Adrenal gland (tissue), 19 donors: ENCODE measurements at regions of chr17 and their contacts with region 1.

Region 1: GRCh38 chr17:48335858-48336500 is 94.0 kb downstream of the SKAP1 start:
- DNase-seq: no peak
- H3K4me3 ChIP-seq: no peak overlapping the region
- H3K27ac ChIP-seq: no peak overlapping the region
- H3K4me1 ChIP-seq: no peaks in the 10 kb centered on the region
- H3K27me3 ChIP-seq: peaks cover 8% of the 10 kb centered on the region
- CTCF ChIP-seq: peak; percentile 66 to 91 (median 74)
- POLR2A ChIP-seq: no peak

Region 2: GRCh38 chr17:48593840-48594537 is 258.0 kb after region 1 on chr17:
- intact Hi-C with region 1: loop called (anchors 5 to 10 kb)
- DNase-seq: peak; percentile 77 to 91 (median 84)
- H3K4me3 ChIP-seq: peak overlapping the region in 2 of 4 donors; percentile 41 to 54
- H3K27ac ChIP-seq: peak overlapping the region in 3 of 5 donors; percentile 53 to 66 (median 62)
- H3K4me1 ChIP-seq: peaks cover 0 to 33% of the 10 kb centered on the region in 2 donors
- H3K27me3 ChIP-seq: no peaks in the 10 kb centered on the region
- CTCF ChIP-seq: peak; percentile 88 to 94 (median 92)
- POLR2A ChIP-seq: peak; percentile 22 to 27